CD14-positive monocyte (primary cell): ENCODE measurements at regions of chr5 and their contacts with region 1.

Region 1: GRCh38 chr5:160269017-160269416 is 39.7 kb downstream of the FABP6 start:
- DNase-seq: peak; percentile 97 to 100 (median 99)
- H3K4me3 ChIP-seq: peak overlapping the region in 1 of 3 experiments; percentile 45
- H3K4me3 Mint-ChIP-seq: peak overlapping the region; percentile 49 to 75
- H3K27ac ChIP-seq: peak overlapping the region; percentile 23 to 58
- H3K27ac Mint-ChIP-seq: peak overlapping the region; percentile 80 to 94 (median 89)
- H3K4me1 ChIP-seq: peaks cover 22 to 25% of the 10 kb centered on the region in 2 donors
- H3K4me1 Mint-ChIP-seq: peaks cover 27% of the 10 kb centered on the region
- H3K27me3 ChIP-seq: peaks cover 2 to 5% of the 10 kb centered on the region in 2 donors
- H3K27me3 Mint-ChIP-seq: peaks cover 9 to 15% (median 9%) of the 10 kb centered on the region in 3 donors
- CTCF ChIP-seq: no peak

Region 2: GRCh38 chr5:160324886-160325285 is 55.9 kb after region 1 on chr5:
- intact Hi-C with region 1: loop called (anchors 5 kb)
- DNase-seq: peak in 1 of 3 donors; percentile 6
- H3K4me3 ChIP-seq: no peak overlapping the region
- H3K4me3 Mint-ChIP-seq: no peak overlapping the region
- H3K27ac ChIP-seq: no peak overlapping the region
- H3K27ac Mint-ChIP-seq: peak overlapping the region in 1 of 7 donors; percentile 67
- H3K4me1 ChIP-seq: peaks cover 8 to 19% of the 10 kb centered on the region in 2 donors
- H3K4me1 Mint-ChIP-seq: peaks cover 17% of the 10 kb centered on the region
- H3K27me3 ChIP-seq: no peaks in the 10 kb centered on the region
- H3K27me3 Mint-ChIP-seq: peaks cover 1 to 6% (median 5%) of the 10 kb centered on the region in 3 donors
- CTCF ChIP-seq: no peak

Region 3: DNA sequence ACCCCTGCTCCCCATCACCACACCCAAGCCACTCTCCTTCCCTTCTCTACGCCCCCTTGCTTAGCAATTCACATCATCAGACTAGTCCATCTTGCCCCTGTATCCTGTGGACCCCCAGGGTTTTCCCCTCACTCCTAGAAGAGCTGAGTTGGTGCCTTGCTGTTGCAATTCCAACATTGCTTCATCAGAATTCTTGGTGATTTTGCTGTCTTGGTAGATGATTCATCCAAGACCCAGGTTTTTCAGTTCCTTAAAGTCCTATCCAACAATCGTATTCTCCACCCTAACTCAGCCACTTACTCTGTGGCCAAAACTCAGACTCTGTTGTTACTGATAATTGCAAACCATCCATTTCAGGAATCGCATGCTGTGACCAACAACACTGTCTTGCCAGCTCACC is 64.7 kb after region 1 on chr5:
- intact Hi-C with region 1: loop called in 1 of 2 experiments (anchors 5 kb)
- DNase-seq: peak; percentile 87 to 98 (median 98)
- H3K4me3 ChIP-seq: peak overlapping the region in 1 of 3 experiments; percentile 13
- H3K4me3 Mint-ChIP-seq: peak overlapping the region in 1 of 2 donors; percentile 52
- H3K27ac ChIP-seq: peak overlapping the region; percentile 58 to 65
- H3K27ac Mint-ChIP-seq: peak overlapping the region in 6 of 7 donors; percentile 83 to 94 (median 87)
- H3K4me1 ChIP-seq: peaks cover 29 to 37% of the 10 kb centered on the region in 2 donors
- H3K4me1 Mint-ChIP-seq: peaks cover 20% of the 10 kb centered on the region
- H3K27me3 ChIP-seq: no peaks in the 10 kb centered on the region
- H3K27me3 Mint-ChIP-seq: peaks cover 4 to 12% (median 5%) of the 10 kb centered on the region in 3 donors
- CTCF ChIP-seq: no peak